Dendritic cell treated with granulocyte-macrophage colony-stimulating factor and Interleukin-4, amounts not matched to agents 40 ng/mL and 50 ng/mL, for 4 days (primary cell): ENCODE measurements at regions of chr2 and their contacts with region 1.

Region 1: GRCh38 chr2:151886241-151886640 is 58.0 kb upstream of the ARL5A start:
- H3K4me3 Mint-ChIP-seq: no peak overlapping the region
- H3K27ac Mint-ChIP-seq: peak overlapping the region; percentile 51
- H3K4me1 Mint-ChIP-seq: peaks cover 13% of the 10 kb centered on the region
- H3K27me3 Mint-ChIP-seq: no peaks in the 10 kb centered on the region

Region 2: GRCh38 chr2:151840216-151841046 is 45.8 kb before region 1 on chr2:
- intact Hi-C with region 1: loop called (anchors 5 kb)
- H3K4me3 Mint-ChIP-seq: no peak overlapping the region
- H3K27ac Mint-ChIP-seq: peak overlapping the region; percentile 67
- H3K4me1 Mint-ChIP-seq: peaks cover 37% of the 10 kb centered on the region
- H3K27me3 Mint-ChIP-seq: no peaks in the 10 kb centered on the region

Region 3: GRCh38 chr2:151869291-151869690 is 16.9 kb before region 1 on chr2:
- intact Hi-C with region 1: no loop called
- H3K4me3 Mint-ChIP-seq: no peak overlapping the region
- H3K27ac Mint-ChIP-seq: no peak overlapping the region
- H3K4me1 Mint-ChIP-seq: peaks cover 3% of the 10 kb centered on the region
- H3K27me3 Mint-ChIP-seq: no peaks in the 10 kb centered on the region

Region 4: GRCh38 chr2:151900331-151900730 is 14.1 kb after region 1 on chr2:
- intact Hi-C with region 1: no loop called
- H3K4me3 Mint-ChIP-seq: no peak overlapping the region
- H3K27ac Mint-ChIP-seq: no peak overlapping the region
- H3K4me1 Mint-ChIP-seq: peaks cover 20% of the 10 kb centered on the region
- H3K27me3 Mint-ChIP-seq: no peaks in the 10 kb centered on the region

Region 5: GRCh38 chr2:152477347-152478092 is 591.3 kb after region 1 on chr2:
- intact Hi-C with region 1: no loop called
- H3K4me3 Mint-ChIP-seq: no peak overlapping the region
- H3K27ac Mint-ChIP-seq: no peak overlapping the region
- H3K4me1 Mint-ChIP-seq: peaks cover 4% of the 10 kb centered on the region
- H3K27me3 Mint-ChIP-seq: no peaks in the 10 kb centered on the region